GM12878 (cell line): ENCODE measurements at regions of chr7 and their contacts with region 1.

Region 1: GRCh38 chr7:130966246-130967009 is 232.4 kb upstream of the KLF14 start:
- DNase-seq: peak; percentile 45
- ATAC-seq: peak; percentile 85
- H3K4me3 ChIP-seq: no peak overlapping the region
- H3K27ac ChIP-seq: no peak overlapping the region
- H3K4me1 ChIP-seq: peaks cover 39% of the 10 kb centered on the region
- H3K27me3 ChIP-seq: no peaks in the 10 kb centered on the region
- CTCF ChIP-seq: no peak
- EP300 ChIP-seq: peak; percentile 52 to 74; a peak in 2 of 4 replicates
- POLR2A ChIP-seq: no peak
- RAD21 ChIP-seq: no peak

Region 2: GRCh38 chr7:130777426-130777825 is 189.0 kb before region 1 on chr7:
- CTCF ChIA-PET with region 1: no interaction called
- POLR2A ChIA-PET with region 1: no interaction called
- RAD21 ChIA-PET with region 1: no interaction called
- SMC1A ChIA-PET with region 1: no interaction called
- in situ Hi-C with region 1: no loop called
- intact Hi-C with region 1: no loop called
- DNase-seq: no peak
- ATAC-seq: no peak
- H3K4me3 ChIP-seq: no peak overlapping the region
- H3K27ac ChIP-seq: no peak overlapping the region
- H3K4me1 ChIP-seq: no peaks in the 10 kb centered on the region
- H3K27me3 ChIP-seq: no peaks in the 10 kb centered on the region; a peak in 1 of 4 replicates
- CTCF ChIP-seq: no peak
- EP300 ChIP-seq: no peak
- POLR2A ChIP-seq: no peak
- RAD21 ChIP-seq: no peak

Region 3: GRCh38 chr7:130943336-130943901 is 23.0 kb before region 1 on chr7:
- CTCF ChIA-PET with region 1: interaction called, 106 read pairs
- POLR2A ChIA-PET with region 1: interaction called, 4 read pairs
- RAD21 ChIA-PET with region 1: interaction called, 94 read pairs
- SMC1A ChIA-PET with region 1: interaction called, 145 read pairs
- in situ Hi-C with region 1: no loop called
- intact Hi-C with region 1: no loop called
- DNase-seq: no peak
- ATAC-seq: peak; percentile 22
- H3K4me3 ChIP-seq: peak overlapping the region; percentile 39
- H3K27ac ChIP-seq: peak overlapping the region; percentile 78
- H3K4me1 ChIP-seq: peaks cover 36% of the 10 kb centered on the region
- H3K27me3 ChIP-seq: no peaks in the 10 kb centered on the region
- CTCF ChIP-seq: no peak
- EP300 ChIP-seq: peak in 1 of 2 experiments; percentile 43; a peak in 2 of 4 replicates
- POLR2A ChIP-seq: no peak
- RAD21 ChIP-seq: no peak

Region 4: GRCh38 chr7:130996841-130997231 is 30.4 kb after region 1 on chr7:
- CTCF ChIA-PET with region 1: interaction called, 4 read pairs
- POLR2A ChIA-PET with region 1: interaction called, 10 read pairs
- RAD21 ChIA-PET with region 1: interaction called, 8 read pairs
- SMC1A ChIA-PET with region 1: interaction called, 5 read pairs
- in situ Hi-C with region 1: no loop called
- intact Hi-C with region 1: no loop called
- DNase-seq: no peak
- ATAC-seq: peak; percentile 45
- H3K4me3 ChIP-seq: no peak overlapping the region
- H3K27ac ChIP-seq: no peak overlapping the region
- H3K4me1 ChIP-seq: peaks cover 18% of the 10 kb centered on the region
- H3K27me3 ChIP-seq: no peaks in the 10 kb centered on the region
- CTCF ChIP-seq: no peak
- EP300 ChIP-seq: no peak
- POLR2A ChIP-seq: no peak; the same call in 1 of the 2 replicates
- RAD21 ChIP-seq: no peak